MCF 10A (cell line): ENCODE measurements at regions of chr12 and their contacts with region 1.

Region 1: GRCh38 chr12:65556681-65557437 is 267.4 kb upstream of the HMGA2 start:
- DNase-seq: peak; percentile 88
- H3K4me3 Mint-ChIP-seq: no peak overlapping the region
- H3K27ac Mint-ChIP-seq: peak overlapping the region; percentile 49
- H3K4me1 Mint-ChIP-seq: peaks cover 6% of the 10 kb centered on the region
- H3K27me3 Mint-ChIP-seq: no peaks in the 10 kb centered on the region
- CTCF ChIP-seq: peak; percentile 89

Region 2: GRCh38 chr12:65403188-65403587 is 153.7 kb before region 1 on chr12:
- CTCF ChIA-PET with region 1: no interaction called
- POLR2A ChIA-PET with region 1: no interaction called
- intact Hi-C with region 1: no loop called
- DNase-seq: no peak
- H3K4me3 Mint-ChIP-seq: no peak overlapping the region
- H3K27ac Mint-ChIP-seq: no peak overlapping the region
- H3K4me1 Mint-ChIP-seq: no peaks in the 10 kb centered on the region
- H3K27me3 Mint-ChIP-seq: no peaks in the 10 kb centered on the region
- CTCF ChIP-seq: no peak

Region 3: DNA sequence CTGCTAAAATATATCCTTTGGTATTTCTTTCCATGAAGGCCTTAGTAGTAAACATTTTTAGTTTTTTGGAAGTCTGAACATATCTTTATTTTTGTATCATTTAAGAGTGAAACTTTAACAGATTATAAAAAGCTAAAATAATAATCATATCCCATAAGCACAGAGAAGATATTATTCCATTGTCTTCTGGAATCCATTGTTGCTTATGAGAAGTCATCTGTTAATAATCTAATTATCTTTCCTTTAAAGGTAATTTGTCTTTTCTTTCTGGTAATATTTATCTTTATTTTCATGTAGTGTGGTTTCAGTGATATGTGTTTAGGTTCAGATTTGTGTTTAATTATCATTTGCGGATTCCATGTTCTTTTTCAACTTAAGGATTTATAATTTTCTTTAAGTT is 16.7 kb before region 1 on chr12:
- CTCF ChIA-PET with region 1: interaction called, 12 read pairs
- POLR2A ChIA-PET with region 1: no interaction called
- intact Hi-C with region 1: no loop called
- DNase-seq: peak; percentile 32
- H3K4me3 Mint-ChIP-seq: no peak overlapping the region
- H3K27ac Mint-ChIP-seq: no peak overlapping the region
- H3K4me1 Mint-ChIP-seq: peaks cover 21% of the 10 kb centered on the region
- H3K27me3 Mint-ChIP-seq: no peaks in the 10 kb centered on the region
- CTCF ChIP-seq: no peak

Region 4: GRCh38 chr12:65597527-65597926 is 40.7 kb after region 1 on chr12:
- CTCF ChIA-PET with region 1: interaction called, 23 read pairs
- POLR2A ChIA-PET with region 1: interaction called, 14 read pairs
- intact Hi-C with region 1: loop called (anchors 1 kb)
- DNase-seq: peak; percentile 14
- H3K4me3 Mint-ChIP-seq: no peak overlapping the region
- H3K27ac Mint-ChIP-seq: peak overlapping the region; percentile 90
- H3K4me1 Mint-ChIP-seq: peaks cover 56% of the 10 kb centered on the region
- H3K27me3 Mint-ChIP-seq: no peaks in the 10 kb centered on the region
- CTCF ChIP-seq: no peak

Region 5: GRCh38 chr12:65823513-65824375 is 266.9 kb after region 1 on chr12:
- CTCF ChIA-PET with region 1: interaction called, 4 read pairs
- POLR2A ChIA-PET with region 1: interaction called, 3 read pairs
- intact Hi-C with region 1: loop called (anchors 2 kb)
- DNase-seq: peak; percentile 85
- H3K4me3 Mint-ChIP-seq: peak overlapping the region; percentile 94
- H3K27ac Mint-ChIP-seq: peak overlapping the region; percentile 90
- H3K4me1 Mint-ChIP-seq: peaks cover 35% of the 10 kb centered on the region
- H3K27me3 Mint-ChIP-seq: no peaks in the 10 kb centered on the region
- CTCF ChIP-seq: no peak

Region 6: DNA sequence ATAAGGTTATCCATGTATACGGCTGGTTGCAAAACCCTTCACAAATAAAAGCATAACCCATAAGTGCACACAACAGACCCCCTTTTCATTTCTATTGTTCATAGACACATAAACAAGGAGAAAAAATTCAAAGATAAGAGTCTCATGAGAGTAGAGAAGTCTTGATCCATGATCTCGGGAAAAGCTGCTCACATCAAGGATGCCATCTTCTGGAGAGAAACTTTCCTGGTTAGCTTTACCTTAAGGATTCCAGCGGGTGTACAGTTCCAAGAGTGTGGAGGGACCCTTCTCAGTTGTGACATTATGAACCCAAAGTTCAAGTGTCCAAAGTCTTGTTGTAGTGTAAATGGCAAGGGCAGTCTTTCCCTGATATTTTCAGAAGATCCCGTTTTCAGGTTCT is 429.2 kb after region 1 on chr12:
- CTCF ChIA-PET with region 1: interaction called, 3 read pairs
- POLR2A ChIA-PET with region 1: no interaction called
- intact Hi-C with region 1: loop called (anchors 2 kb)
- DNase-seq: no peak
- H3K4me3 Mint-ChIP-seq: no peak overlapping the region
- H3K27ac Mint-ChIP-seq: no peak overlapping the region
- H3K4me1 Mint-ChIP-seq: peaks cover 5% of the 10 kb centered on the region
- H3K27me3 Mint-ChIP-seq: no peaks in the 10 kb centered on the region
- CTCF ChIP-seq: no peak